Mammary epithelial cell (primary cell): ENCODE measurements at regions of chr12 and their contacts with region 1.

Region 1: DNA sequence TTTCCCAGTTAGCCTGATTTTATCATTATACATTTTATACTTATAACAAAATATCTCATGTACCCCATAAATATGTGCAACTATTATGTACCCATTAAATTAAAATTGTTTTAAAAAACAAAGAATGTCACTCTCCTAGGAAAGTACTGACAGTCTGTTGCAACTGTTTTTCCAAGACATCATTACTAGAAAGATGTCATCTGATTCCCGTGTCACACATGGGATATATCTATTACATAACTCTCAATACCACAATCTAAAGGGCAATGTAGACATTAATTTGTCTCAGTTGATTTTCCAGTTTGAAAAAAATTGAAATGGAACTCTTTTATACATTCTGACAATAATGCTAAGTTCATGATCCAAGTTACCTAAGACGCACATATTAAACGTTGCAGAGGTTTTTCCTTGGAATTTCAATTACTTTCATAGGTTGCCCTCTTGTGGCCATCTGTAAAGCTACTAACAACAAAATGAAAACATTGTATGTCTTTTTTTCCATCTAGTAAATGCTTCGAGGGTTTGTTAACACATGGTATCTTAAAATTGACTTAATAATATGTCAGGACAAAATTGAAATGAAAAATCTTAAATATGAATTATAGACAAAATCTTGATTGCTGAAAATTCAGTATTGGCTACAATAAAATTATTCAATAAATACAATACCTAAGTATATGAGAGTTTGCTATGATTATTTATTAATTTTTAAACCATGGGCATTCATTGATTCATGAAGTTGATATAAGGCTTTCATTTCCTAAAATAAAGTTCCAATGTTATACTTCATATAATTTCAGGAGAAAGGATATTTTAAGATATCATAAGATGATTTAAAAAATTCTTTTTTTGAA is 131.6 kb downstream of the PPFIA2 start:
- DNase-seq: peak; percentile 23
- H3K4me3 ChIP-seq: no peak overlapping the region
- H3K27ac ChIP-seq: no peak overlapping the region
- H3K4me1 ChIP-seq: no peaks in the 10 kb centered on the region
- H3K27me3 ChIP-seq: no peaks in the 10 kb centered on the region
- CTCF ChIP-seq: peak; percentile 62

Region 2: DNA sequence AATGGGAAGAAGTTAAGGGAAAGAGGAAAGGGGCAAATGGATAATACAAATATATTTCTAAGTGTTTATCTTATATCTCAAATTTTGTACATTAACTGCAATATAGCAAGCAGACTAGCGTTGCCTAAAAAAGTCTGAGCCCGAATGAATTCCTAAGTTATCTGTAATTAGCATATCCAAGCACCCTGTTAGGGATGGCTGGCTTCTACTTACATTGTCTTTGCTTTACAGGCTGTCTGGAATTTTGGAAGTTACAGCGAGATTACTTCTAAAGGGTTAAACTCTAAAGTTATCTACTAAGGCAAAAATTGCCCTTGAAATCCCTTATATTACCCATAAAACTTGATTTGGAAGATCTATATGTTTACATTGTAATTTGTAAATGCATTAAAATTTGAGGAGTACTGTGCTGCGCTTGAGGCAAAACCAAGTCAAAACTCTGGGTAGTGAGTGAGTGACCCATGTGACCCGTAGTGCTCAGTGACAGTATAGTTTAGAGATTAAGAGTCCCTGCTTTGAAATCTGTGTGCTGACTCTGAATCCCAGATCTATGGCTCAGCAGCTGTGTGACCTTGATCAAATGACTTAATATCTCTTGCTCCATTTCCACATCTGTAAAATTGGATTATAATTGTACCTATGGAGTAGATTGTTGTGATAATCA is 672.6 kb before region 1 on chr12:
- CTCF ChIA-PET with region 1: no interaction called
- dilution Hi-C with region 1: no loop called
- in situ Hi-C with region 1: no loop called
- intact Hi-C with region 1: no loop called
- DNase-seq: no peak
- H3K4me3 ChIP-seq: no peak overlapping the region
- H3K27ac ChIP-seq: no peak overlapping the region
- H3K4me1 ChIP-seq: no peaks in the 10 kb centered on the region
- H3K27me3 ChIP-seq: peaks cover 2% of the 10 kb centered on the region
- CTCF ChIP-seq: no peak

Region 3: GRCh38 chr12:81268664-81268926 is 359.0 kb before region 1 on chr12:
- CTCF ChIA-PET with region 1: no interaction called
- dilution Hi-C with region 1: no loop called
- in situ Hi-C with region 1: no loop called
- intact Hi-C with region 1: loop called (anchors 5 kb)
- DNase-seq: peak; percentile 6
- H3K4me3 ChIP-seq: no peak overlapping the region
- H3K27ac ChIP-seq: no peak overlapping the region
- H3K4me1 ChIP-seq: no peaks in the 10 kb centered on the region
- H3K27me3 ChIP-seq: no peaks in the 10 kb centered on the region
- CTCF ChIP-seq: peak; percentile 43 to 51

Region 4: DNA sequence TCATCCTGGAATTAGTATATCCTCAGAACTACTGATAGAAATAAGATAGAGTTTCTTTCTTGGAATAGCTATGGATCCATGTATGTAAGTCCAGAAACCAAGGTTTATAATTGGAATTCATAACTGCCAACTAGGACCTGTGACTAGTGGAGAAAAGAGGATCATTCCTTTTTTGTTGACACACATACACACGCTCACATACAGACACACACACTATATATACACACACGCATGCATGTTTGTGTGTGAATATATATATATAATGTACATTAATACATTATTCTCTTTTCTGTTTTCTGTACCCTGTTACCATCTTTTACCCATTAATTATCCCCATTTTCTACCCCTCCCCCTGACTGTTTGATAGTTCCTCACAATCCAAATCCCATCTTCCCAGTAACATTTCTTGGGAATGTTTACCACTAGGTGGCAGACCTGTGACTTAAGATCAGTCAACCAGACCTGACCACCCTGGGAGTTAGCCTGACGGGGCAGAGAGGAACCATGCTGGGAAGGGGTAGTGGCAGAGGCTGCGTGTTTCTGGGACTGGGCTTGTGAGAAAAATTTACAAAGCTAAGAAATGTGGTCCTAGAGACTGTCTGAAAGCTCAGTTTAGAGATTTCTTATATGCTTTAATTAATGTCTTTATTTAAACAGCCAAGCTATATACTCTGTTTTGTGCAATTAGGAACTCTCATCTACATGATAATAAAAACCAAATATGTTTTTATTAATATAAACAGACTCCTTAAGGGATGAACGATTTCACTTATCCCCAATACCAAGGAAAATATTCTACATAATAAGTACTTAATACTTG is 176.4 kb before region 1 on chr12:
- CTCF ChIA-PET with region 1: interaction called, 3 read pairs
- dilution Hi-C with region 1: no loop called
- in situ Hi-C with region 1: loop called in 1 of 2 experiments (anchors 10 kb)
- intact Hi-C with region 1: loop called (anchors 1 kb)
- DNase-seq: peak; percentile 40
- H3K4me3 ChIP-seq: no peak overlapping the region
- H3K27ac ChIP-seq: no peak overlapping the region
- H3K4me1 ChIP-seq: no peaks in the 10 kb centered on the region
- H3K27me3 ChIP-seq: no peaks in the 10 kb centered on the region
- CTCF ChIP-seq: peak; percentile 61 to 68

Region 5: DNA sequence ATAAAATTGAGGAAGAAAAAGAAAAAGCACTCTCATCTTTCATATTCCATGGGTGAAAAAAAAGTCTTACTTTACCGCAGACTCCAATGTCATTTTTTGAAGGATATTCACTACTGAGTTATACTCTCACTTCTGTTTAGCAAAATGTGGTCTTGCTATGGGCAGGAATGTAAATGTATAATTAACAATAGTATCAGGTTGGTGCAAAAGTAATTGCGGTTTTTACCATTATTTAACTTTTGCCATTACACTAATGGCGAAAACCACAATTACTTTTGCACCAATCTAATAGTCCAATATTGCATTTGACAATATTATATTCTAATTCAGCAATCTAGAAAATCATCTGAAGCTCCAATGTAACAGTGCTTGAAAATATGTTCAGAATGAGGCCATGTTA is 637.2 kb after region 1 on chr12:
- CTCF ChIA-PET with region 1: interaction called, 12 read pairs
- dilution Hi-C with region 1: no loop called
- in situ Hi-C with region 1: no loop called
- intact Hi-C with region 1: no loop called
- DNase-seq: no peak
- H3K4me3 ChIP-seq: no peak overlapping the region
- H3K27ac ChIP-seq: no peak overlapping the region
- H3K4me1 ChIP-seq: no peaks in the 10 kb centered on the region
- H3K27me3 ChIP-seq: no peaks in the 10 kb centered on the region
- CTCF ChIP-seq: no peak